H1 (cell line): ENCODE measurements at regions of chr5 and their contacts with region 1.

Region 1: GRCh38 chr5:134184155-134185135 is 7.7 kb upstream of the SKP1 start:
- DNase-seq: peak; percentile 38 to 90
- H3K4me3 ChIP-seq: no peak overlapping the region
- H3K27ac ChIP-seq: no peak overlapping the region
- H3K4me1 ChIP-seq: no peaks in the 10 kb centered on the region
- H3K27me3 ChIP-seq: no peaks in the 10 kb centered on the region
- CTCF ChIP-seq: peak; percentile 93 to 97 (median 97)
- EP300 ChIP-seq: no peak
- POLR2A ChIP-seq: no peak
- RAD21 ChIP-seq: peak; percentile 92 to 94

Region 2: GRCh38 chr5:134209477-134210240 is 25.2 kb after region 1 on chr5:
- CTCF ChIA-PET with region 1: interaction called, 12 read pairs
- POLR2A ChIA-PET with region 1: interaction called, 28 read pairs
- DNase-seq: no peak
- H3K4me3 ChIP-seq: no peak overlapping the region
- H3K27ac ChIP-seq: no peak overlapping the region
- H3K4me1 ChIP-seq: no peaks in the 10 kb centered on the region
- H3K27me3 ChIP-seq: no peaks in the 10 kb centered on the region
- CTCF ChIP-seq: no peak
- EP300 ChIP-seq: no peak
- POLR2A ChIP-seq: no peak
- RAD21 ChIP-seq: no peak

Region 3: GRCh38 chr5:134240421-134240962 is 56.0 kb after region 1 on chr5:
- CTCF ChIA-PET with region 1: interaction called, 18 read pairs
- POLR2A ChIA-PET with region 1: no interaction called
- DNase-seq: no peak
- H3K4me3 ChIP-seq: no peak overlapping the region
- H3K27ac ChIP-seq: no peak overlapping the region
- H3K4me1 ChIP-seq: peaks cover 4 to 18% (median 10%) of the 10 kb centered on the region in 4 experiments; a peak in 5 of 7 replicates
- H3K27me3 ChIP-seq: no peaks in the 10 kb centered on the region
- CTCF ChIP-seq: no peak
- EP300 ChIP-seq: no peak
- POLR2A ChIP-seq: no peak
- RAD21 ChIP-seq: no peak

Region 4: GRCh38 chr5:134267366-134268018 is 83.0 kb after region 1 on chr5:
- CTCF ChIA-PET with region 1: no interaction called
- POLR2A ChIA-PET with region 1: no interaction called
- DNase-seq: no peak
- H3K4me3 ChIP-seq: no peak overlapping the region
- H3K27ac ChIP-seq: no peak overlapping the region
- H3K4me1 ChIP-seq: no peaks in the 10 kb centered on the region
- H3K27me3 ChIP-seq: no peaks in the 10 kb centered on the region
- CTCF ChIP-seq: no peak
- EP300 ChIP-seq: no peak
- POLR2A ChIP-seq: no peak
- RAD21 ChIP-seq: no peak